Activated CD4-positive, alpha-beta memory T cell treated with anti-CD3 and anti-CD28 coated beads for 36 hours (primary cell): ENCODE measurements at regions of chr1 and their contacts with region 1.

Region 1: GRCh38 chr1:184110272-184111204 is 59.0 kb downstream of the TSEN15 start:
- DNase-seq: peak; percentile 28
- H3K4me3 Mint-ChIP-seq: no peak overlapping the region
- H3K27ac Mint-ChIP-seq: no peak overlapping the region
- H3K4me1 Mint-ChIP-seq: peaks cover 6% of the 10 kb centered on the region
- H3K27me3 Mint-ChIP-seq: no peaks in the 10 kb centered on the region

Region 2: GRCh38 chr1:184163674-184164465 is 53.3 kb after region 1 on chr1:
- CTCF ChIA-PET with region 1: no interaction called
- POLR2A ChIA-PET with region 1: no interaction called
- intact Hi-C with region 1: no loop called
- DNase-seq: peak; percentile 31
- H3K4me3 Mint-ChIP-seq: no peak overlapping the region
- H3K27ac Mint-ChIP-seq: no peak overlapping the region
- H3K4me1 Mint-ChIP-seq: peaks cover 14% of the 10 kb centered on the region
- H3K27me3 Mint-ChIP-seq: peaks cover 1% of the 10 kb centered on the region

Region 3: DNA sequence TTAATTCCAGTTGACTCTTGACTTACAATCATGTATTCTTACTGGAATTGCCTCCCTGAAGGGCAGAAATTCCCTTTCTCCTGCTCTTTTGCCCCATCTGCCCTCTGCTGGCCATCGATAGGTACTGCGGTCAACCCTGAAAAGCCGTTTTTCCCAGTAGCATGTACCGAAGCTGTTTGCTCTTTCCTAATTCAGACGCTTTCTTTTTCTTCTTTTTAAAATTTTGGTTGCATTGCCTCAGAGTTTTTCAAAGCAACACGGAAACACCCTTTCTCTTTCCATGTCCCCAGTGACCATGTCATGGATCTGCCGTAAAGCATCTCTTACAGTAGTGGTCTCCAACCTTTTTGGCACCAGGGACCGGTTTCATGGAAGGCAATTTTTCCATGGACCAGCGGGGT is 112.1 kb after region 1 on chr1:
- CTCF ChIA-PET with region 1: no interaction called
- POLR2A ChIA-PET with region 1: interaction called, 3 read pairs
- intact Hi-C with region 1: loop called (anchors 1 kb)
- DNase-seq: peak; percentile 47
- H3K4me3 Mint-ChIP-seq: no peak overlapping the region
- H3K27ac Mint-ChIP-seq: no peak overlapping the region
- H3K4me1 Mint-ChIP-seq: no peaks in the 10 kb centered on the region
- H3K27me3 Mint-ChIP-seq: no peaks in the 10 kb centered on the region